IMR-90 (cell line): ENCODE measurements at regions of chr20 and their contacts with region 1.

Region 1: GRCh38 chr20:62668441-62669027 is 26.2 kb downstream of the SLCO4A1 start:
- DNase-seq: peak; percentile 74
- ATAC-seq: peak; percentile 98
- H3K4me3 ChIP-seq: no peak overlapping the region
- H3K27ac ChIP-seq: no peak overlapping the region
- H3K4me1 ChIP-seq: no peaks in the 10 kb centered on the region
- H3K27me3 ChIP-seq: no peaks in the 10 kb centered on the region
- CTCF ChIP-seq: peak; percentile 99
- POLR2A ChIP-seq: peak; percentile 53; the same call in 1 of the 2 replicates
- RAD21 ChIP-seq: peak; percentile 99

Region 2: DNA sequence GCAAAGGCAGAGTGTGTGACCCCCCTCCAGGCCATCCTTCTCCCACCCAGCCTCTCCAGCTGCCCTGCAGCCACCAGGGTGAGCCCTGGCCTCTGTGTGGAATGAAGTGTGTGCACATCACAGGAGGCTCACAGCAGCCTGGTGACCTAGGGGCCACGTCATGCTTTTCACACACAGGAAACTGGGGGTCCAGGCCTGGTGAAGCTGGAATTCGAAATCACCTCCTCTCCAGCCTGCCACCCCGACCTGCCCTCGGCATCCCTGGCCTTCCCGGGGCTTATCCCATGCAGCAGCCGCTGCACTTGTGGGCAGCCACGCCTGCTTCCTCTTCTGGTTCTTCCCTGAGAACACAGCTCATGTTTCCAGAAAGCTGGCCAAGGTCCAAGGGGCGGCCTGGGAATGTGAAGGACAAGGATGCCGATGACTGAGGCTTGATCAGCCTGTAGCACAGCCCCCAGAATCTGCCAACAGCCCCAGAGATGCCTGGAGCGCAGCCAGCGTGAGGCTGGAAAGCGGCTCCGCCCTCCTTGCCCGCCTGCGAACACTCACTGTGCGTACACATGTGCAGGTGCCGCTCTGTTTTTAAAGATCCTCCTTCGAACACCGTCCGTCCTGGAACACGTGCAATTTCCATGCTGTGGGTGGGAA is 35.9 kb after region 1 on chr20:
- CTCF ChIA-PET with region 1: no interaction called
- POLR2A ChIA-PET with region 1: no interaction called
- dilution Hi-C with region 1: no loop called
- in situ Hi-C with region 1: no loop called
- intact Hi-C with region 1: loop called (anchors 1 kb)
- DNase-seq: peak; percentile 95
- ATAC-seq: peak; percentile 75
- H3K4me3 ChIP-seq: no peak overlapping the region
- H3K27ac ChIP-seq: peak overlapping the region; percentile 76
- H3K4me1 ChIP-seq: peaks cover 15% of the 10 kb centered on the region
- H3K27me3 ChIP-seq: peaks cover 14% of the 10 kb centered on the region; the same call in 1 of the 2 replicates
- CTCF ChIP-seq: 0 out of 2 replicates have a peak, but pooled peaks have one; percentile 9
- POLR2A ChIP-seq: 0 out of 2 replicates have a peak, but pooled peaks have one; percentile 29
- RAD21 ChIP-seq: no peak

Region 3: DNA sequence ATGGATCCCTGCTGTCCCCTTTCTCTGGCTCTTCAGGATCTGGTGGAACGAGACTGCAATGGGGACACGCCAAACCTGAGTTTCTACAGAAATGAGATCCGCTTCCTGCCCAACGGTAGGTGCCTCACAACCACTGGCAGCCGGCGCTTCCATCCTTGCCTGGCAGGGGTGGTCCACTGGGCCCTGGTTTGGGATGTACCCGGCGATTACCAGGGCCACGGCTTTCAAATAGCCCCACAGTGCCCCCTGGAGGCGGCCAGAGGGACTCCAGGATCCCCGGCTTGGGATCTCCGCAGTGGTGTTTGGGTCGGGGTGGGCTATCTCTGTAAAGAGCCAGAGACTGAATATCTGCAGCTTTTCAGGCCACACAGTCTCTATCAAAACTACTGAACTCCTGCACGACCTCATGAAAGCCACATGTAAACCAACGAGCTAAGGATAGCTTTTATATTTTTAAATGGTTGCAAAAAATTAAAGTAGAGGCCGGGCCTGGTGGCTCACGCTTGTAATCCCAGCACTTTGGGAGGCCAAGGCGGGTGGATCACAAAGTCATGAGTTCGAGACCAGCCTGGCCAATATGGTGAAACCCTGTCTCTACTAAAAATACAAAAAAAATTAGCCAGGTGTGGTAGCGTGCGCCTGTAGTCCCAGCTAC is 139.8 kb after region 1 on chr20:
- CTCF ChIA-PET with region 1: no interaction called
- POLR2A ChIA-PET with region 1: no interaction called
- dilution Hi-C with region 1: no loop called
- in situ Hi-C with region 1: no loop called
- intact Hi-C with region 1: loop called (anchors 1 kb)
- DNase-seq: peak; percentile 48
- ATAC-seq: peak; percentile 64
- H3K4me3 ChIP-seq: no peak overlapping the region
- H3K27ac ChIP-seq: no peak overlapping the region
- H3K4me1 ChIP-seq: peaks cover 10% of the 10 kb centered on the region
- H3K27me3 ChIP-seq: no peaks in the 10 kb centered on the region
- CTCF ChIP-seq: peak; percentile 81
- POLR2A ChIP-seq: no peak
- RAD21 ChIP-seq: peak; percentile 77

Region 4: DNA sequence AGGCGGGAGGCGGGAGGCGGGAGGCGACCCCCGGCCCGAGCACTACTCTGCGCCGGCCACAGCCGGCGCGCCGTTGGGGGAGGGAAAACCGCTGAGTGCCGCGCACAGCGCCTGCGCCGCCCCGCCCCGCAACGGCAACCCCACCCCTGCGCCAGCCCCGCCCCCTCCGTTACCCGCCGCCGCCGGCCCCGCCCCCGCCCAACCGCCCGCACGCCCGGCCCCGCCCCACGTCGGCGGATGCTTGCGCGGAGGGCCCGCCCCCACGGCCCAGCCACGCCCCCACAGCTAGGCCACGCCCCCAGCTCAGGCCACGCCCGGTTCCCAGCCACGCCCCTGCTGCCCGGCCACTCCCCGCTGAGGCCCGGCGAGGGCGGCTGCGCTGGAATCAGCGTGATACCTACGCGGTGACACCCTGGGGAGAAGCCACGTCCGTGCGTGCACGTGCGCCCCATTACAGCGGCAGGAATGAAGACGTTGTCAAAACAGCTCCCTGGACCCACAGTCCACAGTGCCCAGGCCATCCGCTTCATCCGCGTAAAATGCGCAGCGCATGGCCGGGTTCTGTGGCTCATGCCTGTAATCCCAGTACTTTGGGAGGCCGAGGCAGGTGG is 193.3 kb after region 1 on chr20 and contains the start of gene TCFL5:
- CTCF ChIA-PET with region 1: no interaction called
- POLR2A ChIA-PET with region 1: no interaction called
- dilution Hi-C with region 1: no loop called
- in situ Hi-C with region 1: no loop called
- intact Hi-C with region 1: no loop called
- DNase-seq: peak; percentile 76
- ATAC-seq: peak; percentile 94
- H3K4me3 ChIP-seq: peak within 1 kb of the TSS; percentile 100
- H3K27ac ChIP-seq: peak within 1 kb of the TSS; percentile 87
- H3K4me1 ChIP-seq: 0 out of 2 replicates have a peak, but pooled peaks cover 3% of the 10 kb centered on the region
- H3K27me3 ChIP-seq: no peaks in the 10 kb centered on the region; the same call in 1 of the 2 replicates
- CTCF ChIP-seq: no peak
- POLR2A ChIP-seq: no peak
- RAD21 ChIP-seq: no peak
- total RNA-seq, gene TCFL5: 8.2 and 8.3 TPM in 2 replicates